Mammary epithelial cell (primary cell): ENCODE measurements at regions of chr9 and their contacts with region 1.

Region 1: DNA sequence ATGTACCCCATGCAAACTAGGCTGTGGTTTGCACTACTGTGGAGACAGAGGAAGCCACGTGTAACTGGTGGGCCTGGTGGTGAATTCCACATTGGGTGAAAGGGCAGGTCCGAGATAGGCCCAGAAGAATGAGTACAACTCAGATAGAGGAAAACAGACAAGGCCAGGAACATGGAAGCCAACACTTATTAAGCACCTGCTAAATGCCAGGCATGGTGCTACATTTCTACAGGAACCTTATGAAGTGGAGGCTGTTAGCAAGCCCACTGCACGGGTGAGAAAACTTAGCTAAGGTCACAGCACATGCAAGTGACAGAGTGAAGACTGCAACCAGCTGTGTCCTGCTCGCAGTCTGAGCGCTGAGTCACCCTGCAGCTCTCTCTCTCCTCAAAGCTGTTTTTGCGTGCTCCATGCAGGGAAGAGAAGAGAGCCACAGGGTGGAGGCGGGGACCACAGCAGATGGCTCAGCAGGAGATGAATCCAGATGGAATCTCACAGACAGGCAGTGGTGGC is 65.5 kb upstream of the SPTLC1 start:
- DNase-seq: peak; percentile 18
- H3K4me3 ChIP-seq: no peak overlapping the region
- H3K27ac ChIP-seq: no peak overlapping the region
- H3K4me1 ChIP-seq: no peaks in the 10 kb centered on the region
- H3K27me3 ChIP-seq: no peaks in the 10 kb centered on the region
- CTCF ChIP-seq: no peak

Region 2: DNA sequence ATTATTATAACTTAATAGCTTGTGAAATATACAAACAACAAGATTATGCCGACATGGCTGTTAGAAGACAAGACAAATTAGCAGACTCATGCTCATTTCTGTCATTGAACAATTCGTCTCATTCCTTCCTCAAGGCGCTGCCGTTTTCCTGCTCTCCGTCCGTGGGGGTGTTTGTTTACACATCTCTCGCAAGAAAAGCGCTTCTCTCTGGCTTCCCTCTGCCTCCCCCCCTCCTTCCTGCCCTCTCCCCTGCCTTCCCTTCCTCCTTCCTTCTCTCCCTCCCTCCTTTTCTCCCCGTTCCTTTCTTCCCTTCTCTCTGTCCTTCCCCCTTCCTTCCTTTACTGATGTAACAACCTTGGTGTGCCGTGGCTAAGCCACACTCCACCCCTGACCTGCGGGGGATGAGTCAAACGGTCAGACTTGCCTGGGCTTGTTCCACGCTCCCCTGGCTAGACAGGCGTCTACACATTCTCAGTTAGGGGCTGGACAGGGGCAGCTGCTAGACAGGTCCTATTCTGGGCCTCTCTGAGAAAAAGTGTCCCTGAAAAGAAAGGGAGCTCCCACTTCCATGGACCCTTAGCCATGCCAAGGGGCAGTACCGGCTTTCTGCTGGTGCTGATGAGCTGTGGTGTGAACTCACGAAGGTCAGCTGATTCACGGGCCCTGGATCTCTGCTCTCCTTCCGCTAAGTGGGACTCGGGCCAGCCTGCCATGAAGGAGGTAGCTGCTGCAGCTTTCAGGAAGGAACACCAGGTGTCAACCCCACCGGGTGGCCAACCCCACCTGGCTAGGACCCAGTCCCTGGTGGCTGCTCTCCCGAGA is 33.5 kb before region 1 on chr9:
- CTCF ChIA-PET with region 1: no interaction called
- dilution Hi-C with region 1: loop called (anchors 5 kb)
- in situ Hi-C with region 1: no loop called
- intact Hi-C with region 1: no loop called
- DNase-seq: peak; percentile 90
- H3K4me3 ChIP-seq: no peak overlapping the region
- H3K27ac ChIP-seq: peak overlapping the region; percentile 56
- H3K4me1 ChIP-seq: peaks cover 24% of the 10 kb centered on the region
- H3K27me3 ChIP-seq: no peaks in the 10 kb centered on the region
- CTCF ChIP-seq: peak in 1 of 2 donors; percentile 26

Region 3: GRCh38 chr9:92254381-92255337 is 73.9 kb after region 1 on chr9:
- CTCF ChIA-PET with region 1: no interaction called
- dilution Hi-C with region 1: loop called (anchors 5 kb)
- in situ Hi-C with region 1: no loop called
- intact Hi-C with region 1: no loop called
- DNase-seq: no peak
- H3K4me3 ChIP-seq: no peak overlapping the region
- H3K27ac ChIP-seq: no peak overlapping the region
- H3K4me1 ChIP-seq: no peaks in the 10 kb centered on the region
- H3K27me3 ChIP-seq: no peaks in the 10 kb centered on the region
- CTCF ChIP-seq: no peak

Region 4: GRCh38 chr9:92265159-92265558 is 84.4 kb after region 1 on chr9:
- CTCF ChIA-PET with region 1: no interaction called
- dilution Hi-C with region 1: no loop called
- in situ Hi-C with region 1: no loop called
- intact Hi-C with region 1: no loop called
- DNase-seq: peak; percentile 25
- H3K4me3 ChIP-seq: no peak overlapping the region
- H3K27ac ChIP-seq: no peak overlapping the region
- H3K4me1 ChIP-seq: no peaks in the 10 kb centered on the region
- H3K27me3 ChIP-seq: no peaks in the 10 kb centered on the region
- CTCF ChIP-seq: no peak